Left ventricle myocardium inferior (tissue), 1 donor: ENCODE measurements at regions of chr14 and their contacts with region 1.

Region 1: GRCh38 chr14:60184146-60184904 is 19.1 kb upstream of the DHRS7 start:
- DNase-seq: no peak
- H3K4me3 ChIP-seq: peak overlapping the region; percentile 65
- H3K27ac ChIP-seq: peak overlapping the region; percentile 59
- H3K4me1 ChIP-seq: peaks cover 7% of the 10 kb centered on the region
- H3K27me3 ChIP-seq: no peaks in the 10 kb centered on the region
- CTCF ChIP-seq: peak; percentile 80

Region 2: GRCh38 chr14:59964251-59965007 is 219.9 kb before region 1 on chr14:
- intact Hi-C with region 1: loop called (anchors 2 kb)
- DNase-seq: no peak
- H3K4me3 ChIP-seq: peak overlapping the region; percentile 68
- H3K27ac ChIP-seq: no peak overlapping the region
- H3K4me1 ChIP-seq: peaks cover 6% of the 10 kb centered on the region
- H3K27me3 ChIP-seq: no peaks in the 10 kb centered on the region
- CTCF ChIP-seq: no peak

Region 3: DNA sequence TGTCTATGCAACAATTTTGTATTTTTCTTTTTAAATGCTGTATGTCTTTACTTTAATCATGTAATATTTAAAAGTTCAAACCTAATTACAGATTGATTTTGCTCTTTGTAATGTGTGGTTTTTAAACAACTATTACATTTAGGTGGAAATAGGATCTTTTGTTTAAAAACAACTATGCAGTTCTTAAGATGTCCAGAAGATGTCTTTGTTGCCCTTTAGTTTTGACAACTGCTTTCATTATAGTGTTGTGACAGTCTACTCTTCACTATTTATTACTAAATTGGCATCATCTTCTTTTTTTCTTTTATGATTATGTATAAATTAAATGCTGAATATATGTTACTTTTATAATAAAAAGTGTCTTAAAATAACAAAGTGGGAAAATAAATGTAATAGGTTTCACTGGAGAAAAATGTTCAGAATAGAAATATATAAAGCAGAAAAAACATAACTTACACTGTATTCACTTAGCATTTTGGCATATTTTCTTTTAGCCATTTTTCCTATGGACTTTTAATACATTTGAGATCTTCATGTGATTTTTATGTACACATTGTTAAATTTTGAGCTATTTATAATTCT is 119.7 kb before region 1 on chr14:
- intact Hi-C with region 1: loop called (anchors 2 kb)
- DNase-seq: no peak
- H3K4me3 ChIP-seq: no peak overlapping the region
- H3K27ac ChIP-seq: no peak overlapping the region
- H3K4me1 ChIP-seq: no peaks in the 10 kb centered on the region
- H3K27me3 ChIP-seq: no peaks in the 10 kb centered on the region
- CTCF ChIP-seq: peak; percentile 77